ENCODE measurements at regions of chr11 and their contacts with region 1.

Region 1: DNA sequence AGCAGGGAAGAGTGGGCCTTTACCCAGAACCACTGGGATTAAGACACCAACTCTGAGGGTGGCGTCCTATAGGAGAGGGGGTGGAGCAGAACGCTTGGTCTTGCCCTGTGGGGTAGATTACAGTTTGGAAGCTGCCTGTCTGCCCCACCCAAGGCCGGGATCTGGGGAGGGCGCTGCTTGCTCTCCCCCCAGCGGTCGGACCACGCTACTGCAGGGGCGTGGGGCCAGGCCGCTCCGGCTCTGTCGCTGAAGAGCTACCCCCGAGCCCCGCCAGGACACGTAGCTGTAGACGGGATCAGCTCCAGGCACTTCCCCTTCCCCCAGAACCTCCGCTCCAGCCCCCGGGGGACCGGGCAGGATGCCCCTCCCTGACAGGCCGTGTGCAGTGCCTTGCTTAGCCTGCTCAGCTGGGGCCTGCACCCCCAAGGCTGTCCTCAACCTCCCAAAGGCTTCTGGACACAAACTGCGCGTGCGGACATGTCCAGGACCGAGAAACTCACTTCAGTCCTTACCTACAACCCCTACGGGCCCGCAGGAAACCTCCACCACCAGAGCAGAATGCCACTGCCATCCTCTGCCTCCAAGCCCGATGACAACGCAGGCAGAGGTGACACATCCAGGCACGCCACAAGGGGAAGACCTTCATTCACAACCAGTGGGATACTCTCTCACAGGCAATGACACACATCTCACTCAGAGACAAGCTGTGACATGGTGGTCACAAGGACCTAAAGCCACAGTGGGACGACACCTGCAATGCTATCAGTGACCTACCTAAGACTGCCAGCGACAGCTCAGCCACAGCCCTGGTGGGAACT is 3.6 kb downstream of the AHNAK start:
- DNase-seq: no peak
- ATAC-seq: peak; percentile 43
- H3K4me3 ChIP-seq: peak overlapping the region; percentile 80 to 98
- H3K27ac ChIP-seq: peak overlapping the region; percentile 96
- H3K4me1 ChIP-seq: peaks cover 45% of the 10 kb centered on the region
- H3K27me3 ChIP-seq: no peaks in the 10 kb centered on the region
- CTCF ChIP-seq: peak; percentile 98

Region 2: DNA sequence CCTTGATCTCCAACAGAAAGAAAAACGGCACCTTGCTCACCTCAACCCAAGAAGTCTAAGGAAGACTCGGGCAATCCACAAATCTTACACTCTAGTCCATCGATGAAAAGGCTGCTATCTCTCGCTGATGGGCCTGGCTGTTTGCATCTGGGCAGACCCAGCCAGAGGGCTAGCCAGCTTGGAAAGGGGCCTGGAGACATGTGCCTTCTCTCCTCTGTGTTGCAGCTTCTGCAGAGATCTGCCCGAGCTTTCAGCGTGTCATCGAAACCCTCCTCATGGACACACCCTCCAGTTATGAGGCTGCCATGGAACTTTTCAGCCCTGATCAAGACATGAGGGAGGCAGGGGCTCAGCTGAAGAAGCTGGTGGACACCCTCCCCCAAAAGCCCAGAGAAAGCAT is 121.0 kb before region 1 on chr11:
- CTCF ChIA-PET with region 1: interaction called, 29 read pairs
- POLR2A ChIA-PET with region 1: interaction called, 7 read pairs
- in situ Hi-C with region 1: no loop called
- intact Hi-C with region 1: loop called (anchors 5 kb)
- DNase-seq: no peak
- ATAC-seq: no peak
- H3K4me3 ChIP-seq: no peak overlapping the region
- H3K27ac ChIP-seq: peak overlapping the region; percentile 98
- H3K4me1 ChIP-seq: peaks cover 35% of the 10 kb centered on the region
- H3K27me3 ChIP-seq: no peaks in the 10 kb centered on the region
- CTCF ChIP-seq: no peak

Region 3: GRCh38 chr11:62497132-62497915 is 45.6 kb before region 1 on chr11:
- CTCF ChIA-PET with region 1: interaction called, 10 read pairs
- POLR2A ChIA-PET with region 1: no interaction called
- in situ Hi-C with region 1: no loop called
- intact Hi-C with region 1: no loop called
- DNase-seq: peak; percentile 77
- ATAC-seq: peak; percentile 85
- H3K4me3 ChIP-seq: no peak overlapping the region
- H3K27ac ChIP-seq: peak overlapping the region; percentile 99
- H3K4me1 ChIP-seq: peaks cover 38% of the 10 kb centered on the region
- H3K27me3 ChIP-seq: no peaks in the 10 kb centered on the region
- CTCF ChIP-seq: peak; percentile 82; the same call in 1 of the 2 replicates

Region 4: GRCh38 chr11:62556108-62556871 is 13.3 kb after region 1 on chr11:
- CTCF ChIA-PET with region 1: interaction called, 13 read pairs
- POLR2A ChIA-PET with region 1: interaction called, 12 read pairs
- in situ Hi-C with region 1: no loop called
- intact Hi-C with region 1: no loop called
- DNase-seq: peak; percentile 87
- ATAC-seq: peak; percentile 74
- H3K4me3 ChIP-seq: peak overlapping the region in 1 of 2 experiments; percentile 15; a peak in 1 of 4 replicates
- H3K27ac ChIP-seq: peak overlapping the region; percentile 94
- H3K4me1 ChIP-seq: peaks cover 95% of the 10 kb centered on the region
- H3K27me3 ChIP-seq: no peaks in the 10 kb centered on the region
- CTCF ChIP-seq: no peak

Measured in Panc1 (cell line).